IMR-90 (cell line): ENCODE measurements at regions of chr21 and their contacts with region 1.

Region 1: GRCh38 chr21:26715878-26716506 is 129.2 kb downstream of the ADAMTS1 start:
- DNase-seq: peak; percentile 51
- ATAC-seq: peak; percentile 94
- H3K4me3 ChIP-seq: no peak overlapping the region
- H3K27ac ChIP-seq: no peak overlapping the region
- H3K4me1 ChIP-seq: no peaks in the 10 kb centered on the region
- H3K27me3 ChIP-seq: no peaks in the 10 kb centered on the region
- CTCF ChIP-seq: peak; percentile 66
- POLR2A ChIP-seq: no peak
- RAD21 ChIP-seq: peak; percentile 55

Region 2: DNA sequence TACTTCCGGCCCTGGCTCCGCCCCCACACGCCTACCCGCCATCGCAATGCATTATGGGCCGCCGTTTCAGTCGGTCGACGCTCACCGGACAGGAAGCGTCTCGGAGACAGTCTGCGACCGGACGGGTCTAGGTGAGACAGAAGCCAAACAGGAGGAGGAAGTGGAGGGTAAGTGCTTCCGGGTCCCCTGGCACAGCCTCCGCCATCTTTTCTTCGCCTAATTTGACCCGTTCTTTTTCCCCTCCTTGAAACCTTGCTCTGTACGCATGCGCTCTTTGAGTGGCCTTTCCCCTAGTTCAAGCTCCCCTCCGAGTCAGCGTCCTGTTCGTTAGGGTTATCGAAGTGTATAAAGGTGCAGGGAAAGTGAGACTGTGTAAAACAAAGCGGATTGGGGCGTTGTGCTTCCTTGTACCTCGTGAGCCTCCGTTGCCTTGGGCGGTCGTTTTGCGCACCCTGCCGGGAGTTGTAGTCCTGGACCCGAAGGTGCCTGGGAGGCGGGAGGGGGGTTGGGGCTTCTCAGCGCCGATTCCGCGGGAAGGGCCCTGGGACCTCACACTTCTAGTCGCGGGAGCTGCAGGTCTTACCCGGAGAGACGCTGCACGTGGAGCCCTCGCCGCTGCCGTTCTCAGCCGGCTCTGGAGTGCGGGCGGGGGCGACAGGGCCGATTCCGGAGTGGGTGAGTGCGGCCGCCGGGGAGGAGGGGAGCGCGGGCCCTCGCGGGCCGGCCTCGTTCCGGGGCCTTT is 980.9 kb before region 1 on chr21 and contains the starts of genes ATP5PF and GABPA:
- CTCF ChIA-PET with region 1: no interaction called
- POLR2A ChIA-PET with region 1: no interaction called
- dilution Hi-C with region 1: no loop called
- in situ Hi-C with region 1: no loop called
- intact Hi-C with region 1: loop called (anchors 5 kb)
- DNase-seq: peak; percentile 99
- ATAC-seq: peak; percentile 88
- H3K4me3 ChIP-seq: peak within 1 kb of the TSS; percentile 53
- H3K27ac ChIP-seq: peak within 1 kb of the TSS; percentile 99
- H3K4me1 ChIP-seq: no peaks in the 10 kb centered on the region
- H3K27me3 ChIP-seq: no peaks in the 10 kb centered on the region
- CTCF ChIP-seq: no peak
- POLR2A ChIP-seq: peak; percentile 62
- RAD21 ChIP-seq: no peak
- total RNA-seq, gene ATP5PF: 74.7 and 76.0 TPM in 2 replicates
- total RNA-seq, gene GABPA: 17.0 and 26.4 TPM in 2 replicates

Region 3: GRCh38 chr21:25790122-25790877 is 925.7 kb before region 1 on chr21:
- CTCF ChIA-PET with region 1: no interaction called
- POLR2A ChIA-PET with region 1: no interaction called
- dilution Hi-C with region 1: no loop called
- in situ Hi-C with region 1: no loop called
- intact Hi-C with region 1: loop called (anchors 5 kb)
- DNase-seq: peak; percentile 41
- ATAC-seq: peak; percentile 91
- H3K4me3 ChIP-seq: peak overlapping the region; percentile 19; the same call in 1 of the 2 replicates
- H3K27ac ChIP-seq: peak overlapping the region; percentile 24; the same call in 1 of the 2 replicates
- H3K4me1 ChIP-seq: no peaks in the 10 kb centered on the region
- H3K27me3 ChIP-seq: peaks cover 4% of the 10 kb centered on the region
- CTCF ChIP-seq: peak; percentile 40
- POLR2A ChIP-seq: no peak
- RAD21 ChIP-seq: peak; percentile 44

Region 4: GRCh38 chr21:25881525-25882376 is 834.2 kb before region 1 on chr21:
- CTCF ChIA-PET with region 1: no interaction called
- POLR2A ChIA-PET with region 1: no interaction called
- dilution Hi-C with region 1: no loop called
- in situ Hi-C with region 1: loop called (anchors 25 kb)
- intact Hi-C with region 1: loop called (anchors 1 kb)
- DNase-seq: peak; percentile 61
- ATAC-seq: peak; percentile 87
- H3K4me3 ChIP-seq: no peak overlapping the region
- H3K27ac ChIP-seq: no peak overlapping the region
- H3K4me1 ChIP-seq: no peaks in the 10 kb centered on the region
- H3K27me3 ChIP-seq: no peaks in the 10 kb centered on the region
- CTCF ChIP-seq: peak; percentile 86
- POLR2A ChIP-seq: no peak
- RAD21 ChIP-seq: peak; percentile 79

Region 5: GRCh38 chr21:26047279-26047967 is 668.6 kb before region 1 on chr21:
- CTCF ChIA-PET with region 1: no interaction called
- POLR2A ChIA-PET with region 1: no interaction called
- dilution Hi-C with region 1: no loop called
- in situ Hi-C with region 1: no loop called
- intact Hi-C with region 1: no loop called
- DNase-seq: no peak
- ATAC-seq: no peak
- H3K4me3 ChIP-seq: no peak overlapping the region
- H3K27ac ChIP-seq: no peak overlapping the region
- H3K4me1 ChIP-seq: no peaks in the 10 kb centered on the region
- H3K27me3 ChIP-seq: no peaks in the 10 kb centered on the region
- CTCF ChIP-seq: no peak
- POLR2A ChIP-seq: no peak
- RAD21 ChIP-seq: no peak